ENCODE measurements at regions of chr5 and their contacts with region 1.

Region 1: DNA sequence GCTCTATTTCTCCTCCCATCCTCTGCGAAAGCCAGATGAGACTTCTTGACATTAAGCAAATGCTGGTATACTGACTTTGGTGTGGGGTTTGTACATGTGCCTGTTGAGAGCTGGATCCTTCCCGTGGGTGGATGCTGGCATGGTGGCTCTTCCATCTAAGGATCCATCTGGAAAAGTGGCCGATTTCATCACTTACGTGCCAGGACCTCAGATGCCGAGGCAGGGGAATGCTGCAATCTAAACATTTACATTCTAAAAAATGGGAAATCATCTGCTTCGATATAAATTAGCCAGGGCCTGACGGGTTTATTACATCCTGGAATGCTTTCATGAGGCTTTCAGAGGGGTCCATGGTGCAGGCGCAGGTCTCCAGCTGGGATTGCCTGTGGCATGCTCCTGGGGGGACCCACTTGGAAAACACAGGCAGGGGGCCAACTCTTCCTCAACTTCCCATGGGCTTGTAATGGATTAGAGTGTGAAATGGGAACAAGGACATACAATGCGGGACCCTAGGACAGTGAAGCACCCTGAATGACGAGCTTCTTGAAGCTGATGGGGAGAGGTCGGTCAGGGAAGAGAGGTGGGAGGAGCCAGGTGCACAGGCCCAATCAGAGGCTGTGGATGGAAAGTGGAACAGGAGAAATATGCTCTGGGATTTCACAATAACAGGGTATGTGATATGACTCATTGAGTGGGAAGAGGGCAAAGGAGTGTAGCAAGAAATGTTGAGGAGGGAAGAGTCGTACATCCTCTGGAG is 105.5 kb upstream of the PITX1 start:
- DNase-seq: peak; percentile 99
- H3K4me3 Mint-ChIP-seq: peak overlapping the region; percentile 30
- H3K27ac Mint-ChIP-seq: peak overlapping the region; percentile 3
- H3K4me1 Mint-ChIP-seq: peaks cover 65% of the 10 kb centered on the region
- H3K27me3 Mint-ChIP-seq: no peaks in the 10 kb centered on the region
- CTCF ChIP-seq: no peak

Region 2: GRCh38 chr5:134648425-134649162 is 491.0 kb before region 1 on chr5 and contains the start of gene SEC24A:
- CTCF ChIA-PET with region 1: no interaction called
- POLR2A ChIA-PET with region 1: no interaction called
- intact Hi-C with region 1: no loop called
- DNase-seq: peak; percentile 95
- H3K4me3 Mint-ChIP-seq: peak within 1 kb of the TSS; percentile 99
- H3K27ac Mint-ChIP-seq: peak within 1 kb of the TSS; percentile 100
- H3K4me1 Mint-ChIP-seq: peaks cover 5% of the 10 kb centered on the region
- H3K27me3 Mint-ChIP-seq: no peaks in the 10 kb centered on the region
- CTCF ChIP-seq: no peak
- total RNA-seq, gene SEC24A: 39.1 and 41.4 TPM in 2 replicates

Region 3: GRCh38 chr5:135127505-135128239 is 11.9 kb before region 1 on chr5:
- CTCF ChIA-PET with region 1: interaction called, 5 read pairs
- POLR2A ChIA-PET with region 1: interaction called, 41 read pairs
- intact Hi-C with region 1: no loop called
- DNase-seq: peak; percentile 98
- H3K4me3 Mint-ChIP-seq: no peak overlapping the region
- H3K27ac Mint-ChIP-seq: peak overlapping the region; percentile 49
- H3K4me1 Mint-ChIP-seq: peaks cover 36% of the 10 kb centered on the region
- H3K27me3 Mint-ChIP-seq: no peaks in the 10 kb centered on the region
- CTCF ChIP-seq: no peak

Region 4: GRCh38 chr5:135154197-135154596 is 14.6 kb after region 1 on chr5:
- CTCF ChIA-PET with region 1: interaction called, 6 read pairs
- POLR2A ChIA-PET with region 1: interaction called, 90 read pairs
- intact Hi-C with region 1: no loop called
- DNase-seq: peak; percentile 93
- H3K4me3 Mint-ChIP-seq: no peak overlapping the region
- H3K27ac Mint-ChIP-seq: no peak overlapping the region
- H3K4me1 Mint-ChIP-seq: peaks cover 34% of the 10 kb centered on the region
- H3K27me3 Mint-ChIP-seq: no peaks in the 10 kb centered on the region
- CTCF ChIP-seq: no peak